ENCODE measurements at regions of chr1 and their contacts with region 1.

Region 1: GRCh38 chr1:172745014-172745413 is 86.1 kb downstream of the FASLG start:
- H3K4me3 Mint-ChIP-seq: no peak overlapping the region
- H3K27ac Mint-ChIP-seq: peak overlapping the region; percentile 37
- H3K4me1 Mint-ChIP-seq: peaks cover 34% of the 10 kb centered on the region
- H3K27me3 Mint-ChIP-seq: peaks cover 47% of the 10 kb centered on the region

Region 2: GRCh38 chr1:172778456-172779455 is 33.7 kb after region 1 on chr1:
- intact Hi-C with region 1: no loop called
- H3K4me3 Mint-ChIP-seq: no peak overlapping the region
- H3K27ac Mint-ChIP-seq: no peak overlapping the region
- H3K4me1 Mint-ChIP-seq: peaks cover 4% of the 10 kb centered on the region
- H3K27me3 Mint-ChIP-seq: peaks cover 7% of the 10 kb centered on the region

Region 3: DNA sequence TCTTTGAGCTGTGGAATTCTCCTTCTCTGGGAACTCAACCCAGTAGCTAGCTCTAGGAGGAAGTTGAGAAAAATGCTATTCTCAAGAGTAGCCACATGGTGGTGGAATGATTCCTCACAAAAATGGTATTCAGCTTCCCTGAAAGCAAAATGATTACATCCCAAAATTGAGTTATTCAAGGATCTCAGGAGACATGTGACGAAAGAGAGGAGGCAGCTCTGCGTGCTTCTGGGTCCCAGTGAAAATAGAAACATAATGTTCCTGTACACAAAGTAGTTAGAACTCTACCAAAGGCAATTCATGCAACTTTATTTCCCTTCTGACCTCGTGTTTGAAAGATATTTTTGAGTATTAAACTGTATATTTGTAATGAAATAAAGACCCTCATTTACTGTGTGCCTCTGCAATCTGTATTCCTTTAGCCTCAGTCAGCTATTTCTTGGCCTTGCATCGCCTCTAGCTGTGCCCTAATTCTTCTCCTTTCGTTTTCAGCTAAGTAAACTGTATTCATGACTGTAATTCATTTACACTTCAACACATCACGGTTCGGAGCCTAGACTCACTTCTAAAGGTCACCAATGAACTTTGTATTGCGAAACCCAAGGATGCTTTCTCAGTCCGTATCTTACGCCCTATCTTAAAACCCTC is 81.2 kb after region 1 on chr1:
- intact Hi-C with region 1: loop called (anchors 2 kb)
- H3K4me3 Mint-ChIP-seq: no peak overlapping the region
- H3K27ac Mint-ChIP-seq: no peak overlapping the region
- H3K4me1 Mint-ChIP-seq: peaks cover 5% of the 10 kb centered on the region
- H3K27me3 Mint-ChIP-seq: no peaks in the 10 kb centered on the region

Region 4: DNA sequence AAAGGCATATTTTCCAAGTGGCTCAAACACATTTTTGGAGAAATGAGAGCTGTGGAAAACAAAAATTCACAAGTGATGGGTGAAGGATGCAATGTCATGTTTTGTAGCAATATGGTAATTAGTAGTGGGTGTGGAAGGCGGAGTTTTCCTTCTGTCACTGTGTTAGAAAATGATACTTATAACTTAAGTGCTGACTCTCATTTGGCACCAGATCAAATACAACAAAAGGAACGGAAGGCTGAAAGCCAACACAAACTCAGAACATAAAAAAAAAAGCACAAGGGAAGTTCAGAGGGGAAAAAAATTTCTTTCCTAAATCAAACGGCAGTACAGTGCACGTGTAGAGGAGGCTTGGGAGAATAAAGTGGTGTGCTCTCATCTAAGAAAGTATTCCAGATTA is 305.9 kb after region 1 on chr1 and contains the start of gene TNFSF18:
- intact Hi-C with region 1: loop called (anchors 10 kb)
- H3K4me3 Mint-ChIP-seq: peak within 1 kb of the TSS; percentile 21
- H3K27ac Mint-ChIP-seq: peak within 1 kb of the TSS; percentile 72
- H3K4me1 Mint-ChIP-seq: peaks cover 31% of the 10 kb centered on the region
- H3K27me3 Mint-ChIP-seq: no peaks in the 10 kb centered on the region

Region 5: GRCh38 chr1:173202430-173203145 is 457.6 kb after region 1 on chr1:
- intact Hi-C with region 1: loop called (anchors 1 kb)
- H3K4me3 Mint-ChIP-seq: no peak overlapping the region
- H3K27ac Mint-ChIP-seq: no peak overlapping the region
- H3K4me1 Mint-ChIP-seq: peaks cover 26% of the 10 kb centered on the region
- H3K27me3 Mint-ChIP-seq: peaks cover 17% of the 10 kb centered on the region

Region 6: GRCh38 chr1:173824331-173825081 is 1079.5 kb after region 1 on chr1 and contains the starts of genes CENPL and DARS2:
- intact Hi-C with region 1: loop called (anchors 5 kb)
- H3K4me3 Mint-ChIP-seq: peak within 1 kb of the TSS; percentile 97
- H3K27ac Mint-ChIP-seq: peak within 1 kb of the TSS; percentile 99
- H3K4me1 Mint-ChIP-seq: peaks cover 36% of the 10 kb centered on the region
- H3K27me3 Mint-ChIP-seq: no peaks in the 10 kb centered on the region